ENCODE measurements at regions of chr17 and their contacts with region 1.

Region 1: GRCh38 chr17:57833179-57833939 is 16.5 kb downstream of the MRPS23 start:
- DNase-seq: peak; percentile 82
- ATAC-seq: peak; percentile 78
- H3K4me3 Mint-ChIP-seq: no peak overlapping the region
- H3K27ac Mint-ChIP-seq: no peak overlapping the region
- H3K4me1 Mint-ChIP-seq: peaks cover 4% of the 10 kb centered on the region
- H3K27me3 Mint-ChIP-seq: no peaks in the 10 kb centered on the region

Region 2: DNA sequence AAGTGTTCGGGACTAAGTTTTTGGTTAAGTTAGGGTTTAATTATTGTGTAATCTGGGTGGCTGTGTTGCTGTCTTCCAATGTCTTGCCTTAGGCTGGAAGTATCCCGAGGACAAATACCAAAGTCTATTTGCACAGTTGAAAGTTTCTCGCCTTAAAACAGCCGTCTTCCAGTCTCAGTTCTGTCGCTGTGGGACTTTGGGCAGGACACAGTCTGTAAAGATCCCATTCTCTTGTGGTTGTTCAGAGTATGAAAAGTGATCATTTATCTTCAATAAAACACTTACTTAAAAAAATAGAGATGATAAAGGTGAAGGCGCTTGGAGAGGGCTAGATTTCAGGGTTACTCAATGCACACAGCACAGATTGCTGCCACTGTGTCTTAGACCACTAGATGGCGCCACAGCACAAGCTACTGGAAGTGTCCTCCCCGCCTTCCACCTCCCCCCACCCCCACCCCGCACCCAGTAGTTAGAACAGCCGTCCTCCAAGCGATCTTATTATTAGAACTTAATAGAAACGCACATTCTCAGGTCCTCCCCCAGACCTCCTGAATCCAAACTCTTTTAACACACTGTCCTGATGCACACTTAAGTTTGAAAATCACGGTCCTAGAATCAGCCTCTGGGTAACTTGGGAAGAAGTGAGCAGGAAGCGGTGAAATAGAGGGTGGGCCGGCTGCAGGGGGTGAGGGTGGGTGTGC is 702.4 kb before region 1 on chr17:
- CTCF ChIA-PET with region 1: interaction called, 16 read pairs
- DNase-seq: peak; percentile 87
- ATAC-seq: peak; percentile 89
- H3K4me3 Mint-ChIP-seq: no peak overlapping the region
- H3K27ac Mint-ChIP-seq: no peak overlapping the region
- H3K4me1 Mint-ChIP-seq: peaks cover 2% of the 10 kb centered on the region
- H3K27me3 Mint-ChIP-seq: no peaks in the 10 kb centered on the region

Region 3: DNA sequence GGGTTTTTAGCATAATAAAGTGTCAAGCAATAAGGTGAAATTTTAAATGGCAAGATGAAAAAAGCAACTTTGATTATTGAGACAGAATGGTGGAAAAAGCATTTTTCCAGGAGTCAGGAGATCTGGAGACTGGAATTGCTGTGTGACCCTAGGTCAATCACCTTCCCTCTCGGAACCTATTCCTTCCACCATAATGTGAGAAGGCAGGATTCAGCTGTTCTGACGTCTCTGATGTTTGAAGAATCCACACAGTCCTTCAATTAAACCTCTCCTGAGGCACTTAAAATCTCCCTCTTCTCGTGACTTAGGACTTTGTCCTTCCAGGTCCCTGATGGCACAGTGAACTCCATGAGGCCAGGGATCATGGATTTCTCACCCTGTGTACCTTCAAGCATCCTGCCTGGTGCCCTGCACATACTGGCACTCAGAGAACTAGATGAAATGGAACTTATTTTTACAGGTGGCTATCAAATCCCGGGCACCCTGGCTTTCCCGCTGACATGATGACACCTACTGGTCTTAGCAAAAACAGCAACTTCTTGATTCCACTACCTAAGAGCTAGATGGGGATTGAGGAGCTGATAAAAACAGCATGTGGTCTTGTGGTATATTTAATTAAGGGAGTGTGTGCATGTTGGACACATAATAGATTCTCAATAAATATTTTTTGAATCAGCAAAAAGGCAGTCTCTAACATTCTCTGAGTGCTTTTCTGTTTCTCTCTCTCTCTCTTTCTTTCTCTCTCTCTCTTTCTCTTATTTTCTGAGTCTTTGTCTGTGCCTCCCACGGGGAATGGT is 85.9 kb before region 1 on chr17:
- CTCF ChIA-PET with region 1: interaction called, 10 read pairs
- DNase-seq: peak; percentile 57
- ATAC-seq: peak; percentile 74
- H3K4me3 Mint-ChIP-seq: no peak overlapping the region
- H3K27ac Mint-ChIP-seq: no peak overlapping the region
- H3K4me1 Mint-ChIP-seq: peaks cover 13% of the 10 kb centered on the region
- H3K27me3 Mint-ChIP-seq: peaks cover 11% of the 10 kb centered on the region

Region 4: DNA sequence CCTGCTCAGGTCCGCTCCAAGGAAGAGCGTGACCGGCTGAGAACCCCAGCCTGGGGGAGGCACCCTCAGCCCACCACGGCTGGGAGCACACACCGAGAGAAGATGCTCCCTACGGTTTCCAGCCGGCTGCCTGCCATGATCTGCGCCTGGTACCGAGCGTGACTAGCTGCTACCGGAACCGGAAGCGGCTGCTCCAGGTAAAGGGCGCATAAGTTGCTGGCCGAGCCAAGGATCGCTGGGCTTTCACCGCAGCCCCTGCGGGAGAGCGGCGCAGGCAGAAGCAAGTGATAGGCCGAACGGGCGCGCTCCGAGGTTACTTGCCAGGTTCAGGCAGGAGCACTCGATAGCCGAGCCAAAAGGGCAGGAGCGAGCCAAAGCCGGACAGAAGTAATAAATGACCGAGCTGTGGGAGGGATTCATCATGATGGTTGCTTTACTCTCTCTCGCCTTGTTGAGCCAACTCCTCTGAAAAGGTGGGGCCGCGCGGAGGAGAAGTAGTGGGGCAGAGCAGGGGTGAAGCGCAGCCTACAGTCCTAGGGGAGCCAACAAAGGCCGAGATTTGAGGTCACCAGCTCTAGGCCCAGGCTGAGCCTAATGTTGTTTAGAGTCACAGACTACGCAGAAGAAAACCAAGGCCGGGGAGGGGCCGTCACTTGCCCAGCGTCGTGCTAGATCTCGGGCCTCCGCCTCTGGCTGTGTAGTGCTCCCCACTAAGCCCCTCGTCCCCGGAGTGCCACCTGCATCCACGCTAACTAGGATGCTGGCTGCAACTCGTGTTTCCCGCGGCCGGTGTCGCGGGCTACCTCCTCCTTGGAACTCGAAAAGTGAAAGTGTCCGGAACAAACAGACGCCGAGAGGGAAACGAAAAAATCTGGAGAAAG is 16.8 kb after region 1 on chr17 and contains the start of gene MRPS23:
- CTCF ChIA-PET with region 1: interaction called, 37 read pairs
- DNase-seq: peak; percentile 99
- ATAC-seq: peak; percentile 93
- H3K4me3 Mint-ChIP-seq: peak within 1 kb of the TSS; percentile 97
- H3K27ac Mint-ChIP-seq: peak within 1 kb of the TSS; percentile 100
- H3K4me1 Mint-ChIP-seq: peaks cover 37% of the 10 kb centered on the region
- H3K27me3 Mint-ChIP-seq: no peaks in the 10 kb centered on the region
- total RNA-seq, gene MRPS23: 39.4 to 49.4 TPM

Region 5: DNA sequence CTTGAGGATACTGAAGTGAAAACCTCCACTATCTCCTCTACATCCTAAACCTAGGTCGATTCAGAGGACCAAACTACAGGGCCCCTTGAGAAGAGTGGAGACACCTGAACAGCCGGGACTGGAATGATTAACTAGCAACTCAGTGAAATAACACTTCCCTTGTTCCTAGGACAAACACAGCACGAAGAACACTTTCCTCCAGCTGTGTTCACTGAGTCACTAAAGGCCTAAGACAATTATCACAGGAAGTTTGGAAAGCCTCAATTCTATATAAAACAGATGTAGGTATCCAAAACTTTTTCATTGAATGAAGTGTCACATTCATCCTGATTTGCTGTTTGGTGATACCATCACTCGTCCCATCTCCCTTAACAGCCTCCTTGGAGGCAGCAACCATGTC is 137.3 kb after region 1 on chr17:
- CTCF ChIA-PET with region 1: no interaction called
- DNase-seq: no peak
- ATAC-seq: no peak
- H3K4me3 Mint-ChIP-seq: no peak overlapping the region
- H3K27ac Mint-ChIP-seq: no peak overlapping the region
- H3K4me1 Mint-ChIP-seq: no peaks in the 10 kb centered on the region
- H3K27me3 Mint-ChIP-seq: peaks cover 7% of the 10 kb centered on the region